GM18951 (cell line): ENCODE measurements at regions of chr4 and their contacts with region 1.

Region 1: DNA sequence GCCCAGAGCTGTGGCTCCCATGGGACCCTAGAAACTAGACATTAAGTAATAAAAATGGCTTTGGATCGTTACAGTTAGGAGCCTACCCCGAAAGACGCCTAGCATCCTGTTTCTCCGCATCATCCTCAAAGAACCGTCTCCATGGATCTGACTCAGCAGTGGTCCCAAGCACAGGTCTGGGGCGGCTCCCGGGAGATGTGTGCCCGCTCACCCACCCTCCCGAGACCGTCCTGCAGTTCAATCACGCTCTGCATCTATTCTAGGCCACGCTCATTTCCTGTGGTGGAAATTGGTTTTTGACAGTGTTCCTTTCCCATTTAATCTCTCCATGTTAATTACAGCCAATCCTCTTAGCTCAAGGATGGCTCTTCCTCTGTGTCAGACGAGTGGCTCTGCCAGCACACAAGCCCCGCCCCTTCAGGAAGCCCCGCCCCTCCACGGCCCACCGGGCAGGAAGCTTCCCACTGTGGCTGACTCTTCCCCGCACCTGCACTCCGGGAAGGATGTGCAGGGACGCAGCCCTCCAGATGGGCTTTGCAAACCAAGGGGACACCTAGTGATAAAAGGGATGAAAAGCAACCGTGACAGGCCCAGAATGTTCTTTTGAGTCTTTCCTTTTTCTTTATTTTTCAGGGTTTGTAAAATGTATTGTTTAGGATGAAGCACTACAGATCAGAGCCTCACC is 34.5 kb upstream of the HELT start:
- POLR2A ChIP-seq: no peak

Region 2: GRCh38 chr4:184553896-184554295 is 429.9 kb before region 1 on chr4:
- in situ Hi-C with region 1: no loop called
- POLR2A ChIP-seq: no peak

Region 3: GRCh38 chr4:184745831-184746795 is 237.7 kb before region 1 on chr4:
- in situ Hi-C with region 1: loop called (anchors 10 kb)
- POLR2A ChIP-seq: no peak

Region 4: GRCh38 chr4:185242749-185243533 is 259.1 kb after region 1 on chr4:
- in situ Hi-C with region 1: no loop called
- POLR2A ChIP-seq: no peak